ENCODE measurements at regions of chr6 and their contacts with region 1.

Region 1: DNA sequence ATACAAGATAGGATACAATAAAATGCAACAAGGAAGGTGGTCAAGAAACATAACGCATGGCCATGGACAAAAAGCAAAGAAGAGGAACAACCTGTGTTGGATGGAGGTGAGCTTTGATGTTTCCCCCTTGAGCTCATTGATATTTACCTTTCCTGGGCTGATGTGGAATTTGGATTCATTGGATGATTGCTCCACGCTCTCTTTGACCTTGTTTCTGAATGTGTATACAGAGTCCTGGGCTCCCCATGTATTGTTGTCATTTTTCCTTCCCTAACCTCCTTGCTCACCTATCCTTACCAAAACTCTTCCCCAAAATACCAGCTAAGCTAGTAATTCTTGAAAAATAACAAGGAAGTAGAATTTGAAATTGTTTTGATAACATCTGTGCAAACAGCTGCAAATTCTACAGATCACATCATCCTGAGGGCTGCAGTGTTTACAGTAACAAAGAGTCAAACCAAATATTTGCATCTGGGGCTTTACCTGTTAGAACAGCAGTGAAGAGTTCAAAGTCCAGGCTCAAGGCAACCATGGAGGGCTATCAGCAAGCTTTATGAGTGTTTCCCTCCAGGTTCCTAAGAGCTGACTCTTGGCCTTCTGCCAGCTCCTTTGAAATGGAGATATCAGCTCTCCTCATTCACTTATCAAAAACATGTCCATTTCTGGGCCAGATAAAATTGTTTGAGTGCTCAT is 214.3 kb upstream of the MARCKS start:
- DNase-seq: no peak
- H3K4me3 ChIP-seq: no peak overlapping the region
- H3K27ac ChIP-seq: peak overlapping the region in 1 of 2 donors; percentile 13
- H3K4me1 ChIP-seq: no peaks in the 10 kb centered on the region
- H3K27me3 ChIP-seq: no peaks in the 10 kb centered on the region
- CTCF ChIP-seq: no peak
- POLR2A ChIP-seq: no peak

Region 2: GRCh38 chr6:113588376-113589045 is 54.3 kb before region 1 on chr6:
- intact Hi-C with region 1: loop called (anchors 2 kb)
- DNase-seq: no peak
- H3K4me3 ChIP-seq: no peak overlapping the region
- H3K27ac ChIP-seq: no peak overlapping the region
- H3K4me1 ChIP-seq: no peaks in the 10 kb centered on the region
- H3K27me3 ChIP-seq: no peaks in the 10 kb centered on the region
- CTCF ChIP-seq: no peak
- POLR2A ChIP-seq: no peak

Region 3: GRCh38 chr6:113672491-113673149 is 29.8 kb after region 1 on chr6:
- intact Hi-C with region 1: no loop called
- DNase-seq: no peak
- H3K4me3 ChIP-seq: peak overlapping the region; percentile 21 to 54 (median 37)
- H3K27ac ChIP-seq: peak overlapping the region; percentile 29 to 39
- H3K4me1 ChIP-seq: no peaks in the 10 kb centered on the region
- H3K27me3 ChIP-seq: no peaks in the 10 kb centered on the region
- CTCF ChIP-seq: no peak
- POLR2A ChIP-seq: no peak

Region 4: GRCh38 chr6:113901482-113901881 is 258.6 kb after region 1 on chr6:
- intact Hi-C with region 1: no loop called
- DNase-seq: no peak
- H3K4me3 ChIP-seq: no peak overlapping the region
- H3K27ac ChIP-seq: no peak overlapping the region
- H3K4me1 ChIP-seq: no peaks in the 10 kb centered on the region
- H3K27me3 ChIP-seq: no peaks in the 10 kb centered on the region
- CTCF ChIP-seq: no peak
- POLR2A ChIP-seq: no peak

Measured in breast epithelium (tissue), 4 donors.